Sigmoid colon (tissue), 7 donors: ENCODE measurements at regions of chr7 and their contacts with region 1.

Region 1: GRCh38 chr7:67462781-67463191 is 466.2 kb downstream of the TYW1 start:
- DNase-seq: peak; percentile 92
- H3K4me3 ChIP-seq: no peak overlapping the region
- H3K27ac ChIP-seq: peak overlapping the region; percentile 56 to 76 (median 64)
- H3K4me1 ChIP-seq: peaks cover 0 to 40% (median 26%) of the 10 kb centered on the region in 4 donors
- H3K27me3 ChIP-seq: no peaks in the 10 kb centered on the region
- CTCF ChIP-seq: no peak
- EP300 ChIP-seq: peak; percentile 39 to 86 (median 71)
- POLR2A ChIP-seq: no peak

Region 2: GRCh38 chr7:67406976-67407375 is 55.8 kb before region 1 on chr7:
- intact Hi-C with region 1: loop called (anchors 1 kb)
- DNase-seq: peak; percentile 67
- H3K4me3 ChIP-seq: no peak overlapping the region
- H3K27ac ChIP-seq: peak overlapping the region in 3 of 4 donors; percentile 46 to 64 (median 49)
- H3K4me1 ChIP-seq: peaks cover 0 to 58% (median 46%) of the 10 kb centered on the region in 4 donors
- H3K27me3 ChIP-seq: no peaks in the 10 kb centered on the region
- CTCF ChIP-seq: no peak
- EP300 ChIP-seq: no peak
- POLR2A ChIP-seq: no peak

Region 3: DNA sequence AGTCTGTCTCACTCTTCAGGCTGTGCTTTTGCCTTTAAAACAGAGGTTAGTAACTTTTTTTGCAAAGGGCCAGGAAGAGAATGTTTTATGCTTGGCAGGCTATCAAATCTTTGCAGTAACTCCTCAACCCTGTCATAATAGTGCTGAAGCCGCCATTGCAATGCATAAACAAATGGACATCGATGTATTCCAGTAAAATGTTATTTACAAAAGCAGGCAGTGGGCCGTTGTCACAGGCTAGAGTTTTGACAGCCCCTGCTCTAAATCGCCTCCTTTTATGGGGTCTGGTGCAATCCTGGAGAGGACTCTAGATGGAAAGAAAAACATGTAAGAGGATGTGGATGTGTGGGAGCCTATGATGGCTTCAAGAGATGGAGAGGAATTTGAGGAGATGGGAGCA is 102.2 kb after region 1 on chr7:
- intact Hi-C with region 1: loop called (anchors 2 kb)
- DNase-seq: peak; percentile 77
- H3K4me3 ChIP-seq: no peak overlapping the region
- H3K27ac ChIP-seq: peak overlapping the region in 3 of 4 donors; percentile 59 to 71 (median 64)
- H3K4me1 ChIP-seq: peaks cover 0 to 25% (median 23%) of the 10 kb centered on the region in 4 donors
- H3K27me3 ChIP-seq: no peaks in the 10 kb centered on the region
- CTCF ChIP-seq: no peak
- EP300 ChIP-seq: peak in 3 of 4 donors; percentile 50 to 73 (median 69)
- POLR2A ChIP-seq: no peak

Region 4: DNA sequence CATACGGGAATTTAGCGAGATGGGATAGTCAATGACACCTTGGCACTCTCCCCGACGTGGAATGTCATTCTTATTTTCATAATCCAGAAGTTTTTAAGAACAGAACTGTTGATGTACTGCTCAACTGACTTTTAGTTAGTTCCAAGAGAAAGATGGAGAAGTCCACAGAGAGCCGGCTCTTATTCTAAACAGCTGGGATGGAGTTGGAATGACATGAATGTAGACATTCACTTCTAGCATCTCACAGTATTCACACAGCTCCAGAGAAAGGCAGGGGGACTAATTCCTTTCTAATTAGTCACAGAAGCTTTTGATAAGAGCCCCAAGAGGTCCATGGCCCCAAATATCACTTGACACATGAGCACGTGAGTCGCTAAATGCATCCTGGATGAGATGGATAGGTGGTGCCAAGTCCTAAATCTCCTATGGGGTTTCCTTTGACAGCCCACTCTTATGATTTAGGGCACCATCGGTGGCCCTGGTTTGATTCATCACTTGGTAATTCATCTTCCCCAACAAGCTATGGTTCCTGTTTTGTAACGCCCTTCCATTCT is 1715.2 kb after region 1 on chr7:
- intact Hi-C with region 1: loop called (anchors 5 kb)
- DNase-seq: peak; percentile 76
- H3K4me3 ChIP-seq: no peak overlapping the region
- H3K27ac ChIP-seq: peak overlapping the region; percentile 37 to 77 (median 72)
- H3K4me1 ChIP-seq: peaks cover 0 to 30% (median 19%) of the 10 kb centered on the region in 4 donors
- H3K27me3 ChIP-seq: no peaks in the 10 kb centered on the region
- CTCF ChIP-seq: no peak
- EP300 ChIP-seq: peak in 1 of 4 donors; percentile 31
- POLR2A ChIP-seq: no peak